ENCODE measurements at regions of chr16 and their contacts with region 1.

Region 1: DNA sequence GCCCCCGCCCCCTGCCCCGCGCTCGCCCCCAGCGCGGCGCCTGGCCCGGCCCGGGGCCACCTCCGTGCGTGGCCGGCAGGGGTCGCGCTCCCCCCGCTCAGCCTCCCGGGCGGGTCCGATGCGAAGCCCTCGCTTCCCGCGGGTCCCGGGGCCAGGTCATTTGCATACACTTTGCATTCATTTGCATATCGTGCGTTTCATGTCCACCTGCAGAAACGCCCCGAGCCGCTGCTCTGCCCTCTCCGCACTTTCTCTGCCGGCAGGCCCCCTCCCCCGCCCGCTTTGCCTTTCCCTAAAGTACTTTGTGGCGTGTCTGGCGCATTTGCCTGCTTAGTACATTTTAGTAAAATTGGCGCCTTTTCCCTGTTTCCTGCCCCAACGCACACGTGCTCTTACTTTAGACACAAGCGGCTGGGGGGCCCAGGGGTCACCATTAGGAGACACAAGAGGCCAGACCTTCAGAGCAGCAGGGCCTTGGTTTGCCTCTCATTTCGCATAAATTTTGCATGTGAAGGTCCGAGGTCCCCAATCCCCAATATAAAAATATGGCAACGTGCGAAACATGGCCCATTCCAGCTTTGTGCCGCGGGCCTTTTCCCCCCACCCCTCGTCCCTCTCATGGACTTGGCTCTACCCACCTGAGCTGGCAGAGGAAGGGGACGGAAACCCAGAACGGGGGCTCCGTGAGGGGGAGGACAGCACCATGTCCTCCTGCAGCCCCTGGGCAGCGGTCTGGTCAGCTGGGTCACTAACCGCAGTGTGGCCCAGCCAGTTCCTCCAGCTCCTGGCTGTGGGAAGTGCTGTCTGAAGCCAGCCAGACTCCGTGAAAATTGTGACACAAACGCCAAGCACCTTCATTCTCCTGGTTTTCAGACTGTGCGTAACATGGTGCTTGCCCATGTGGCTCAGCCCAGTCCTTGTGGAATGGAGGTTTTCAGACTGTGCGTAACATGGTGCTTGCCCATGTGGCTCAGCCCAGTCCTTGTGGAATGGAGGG is 34.8 kb downstream of the CBFA2T3 start:
- DNase-seq: peak; percentile 89
- ATAC-seq: peak; percentile 43

Region 2: GRCh38 chr16:88811769-88812512 is 130.3 kb before region 1 on chr16 and contains the start of gene APRT:
- intact Hi-C with region 1: loop called (anchors 5 kb)
- DNase-seq: peak; percentile 96
- ATAC-seq: peak; percentile 94
- total RNA-seq, gene APRT: 45.3 TPM

Region 3: GRCh38 chr16:88886845-88887521 is 55.2 kb before region 1 on chr16:
- intact Hi-C with region 1: loop called (anchors 1 kb)
- DNase-seq: peak; percentile 95
- ATAC-seq: peak; percentile 82

Region 4: GRCh38 chr16:88920618-88921590 is 21.3 kb before region 1 on chr16:
- intact Hi-C with region 1: loop called (anchors 2 kb)
- DNase-seq: peak; percentile 87
- ATAC-seq: peak; percentile 86

Region 5: GRCh38 chr16:89093602-89094251 is 151.5 kb after region 1 on chr16 and contains the start of gene ACSF3:
- intact Hi-C with region 1: loop called (anchors 5 kb)
- DNase-seq: peak; percentile 86
- ATAC-seq: peak; percentile 93
- total RNA-seq, gene ACSF3: 17.0 TPM

Region 6: GRCh38 chr16:89171463-89172170 is 229.4 kb after region 1 on chr16 and contains the start of gene CDH15:
- intact Hi-C with region 1: loop called (anchors 5 kb)
- DNase-seq: peak; percentile 95
- ATAC-seq: peak; percentile 94
- total RNA-seq, gene CDH15: not detected

Region 7: DNA sequence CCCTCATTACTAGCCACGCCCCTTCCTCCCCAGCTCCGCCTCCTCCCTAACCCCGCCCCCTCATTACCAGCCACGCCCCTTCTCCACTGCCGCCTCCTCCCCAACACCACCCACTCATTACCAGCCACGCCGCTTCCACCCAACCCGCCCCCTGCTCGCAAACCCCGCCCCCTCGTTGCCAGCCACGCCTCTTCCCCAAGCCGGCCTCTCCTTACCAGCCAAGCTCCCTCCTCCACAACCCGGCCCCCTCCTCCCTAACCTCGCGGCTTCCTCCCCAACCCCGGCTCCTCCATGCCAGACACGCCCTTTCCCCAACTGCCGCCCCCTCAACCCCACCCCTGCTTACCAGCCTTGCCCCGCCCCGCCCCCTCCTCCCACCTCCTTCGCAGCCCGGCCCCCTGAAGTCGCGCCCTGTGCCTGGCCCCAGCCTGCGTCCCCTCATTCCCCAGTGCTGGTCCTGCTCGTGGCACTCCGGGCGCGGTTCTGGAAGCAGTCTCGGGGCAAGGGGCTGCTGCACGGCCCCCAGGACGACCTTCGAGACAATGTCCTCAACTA is 250.9 kb after region 1 on chr16:
- intact Hi-C with region 1: no loop called
- DNase-seq: peak; percentile 76
- ATAC-seq: peak; percentile 32

Region 8: DNA sequence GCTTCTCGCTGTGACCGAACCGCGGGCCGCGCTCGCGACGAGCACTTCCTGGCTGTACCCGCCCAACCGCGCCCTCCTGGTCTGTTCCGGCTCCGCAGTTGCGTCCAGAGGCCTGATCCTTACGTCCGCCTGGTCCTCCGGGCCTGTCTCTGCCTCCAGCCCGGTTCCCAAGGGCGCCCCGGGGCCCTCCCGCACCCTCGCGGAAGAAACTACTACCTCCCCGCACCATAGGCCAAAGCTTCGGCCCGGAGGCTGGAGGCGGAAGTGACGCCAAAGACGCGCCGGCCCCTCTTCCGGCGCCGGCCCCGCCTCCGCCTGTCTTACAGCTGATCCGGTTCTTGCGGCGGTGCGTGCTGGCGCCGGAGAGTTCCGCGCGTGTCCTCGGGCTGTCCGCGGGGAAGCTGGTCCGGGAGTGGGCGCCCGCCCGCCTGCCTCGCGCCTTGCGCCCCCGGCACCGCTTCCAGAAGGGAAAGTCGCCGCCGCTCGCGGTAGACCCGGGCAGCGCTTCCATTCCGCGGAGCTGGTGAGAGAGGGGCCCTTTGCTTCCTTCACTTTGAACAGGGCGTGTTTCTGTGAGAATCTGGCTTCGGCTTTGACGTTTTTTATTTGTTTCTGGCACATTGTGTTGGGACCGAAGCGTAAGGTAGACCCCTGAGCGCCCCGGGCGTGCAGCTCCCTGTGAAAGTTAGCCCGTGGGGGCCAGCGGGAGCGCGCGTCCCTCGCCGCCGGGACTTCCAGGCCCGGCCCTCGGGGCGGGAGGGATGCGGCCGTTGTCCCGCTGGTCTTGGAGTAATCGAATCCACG is 275.4 kb after region 1 on chr16 and contains the start of gene ZNF778:
- intact Hi-C with region 1: loop called (anchors 2 kb)
- DNase-seq: peak; percentile 94
- ATAC-seq: peak; percentile 96
- total RNA-seq, gene ZNF778: 6.9 TPM

Measured in Right ventricle myocardium inferior (tissue), 1 donor.